WTC11 (cell line): ENCODE measurements at regions of chr7 and their contacts with region 1.

Region 1: DNA sequence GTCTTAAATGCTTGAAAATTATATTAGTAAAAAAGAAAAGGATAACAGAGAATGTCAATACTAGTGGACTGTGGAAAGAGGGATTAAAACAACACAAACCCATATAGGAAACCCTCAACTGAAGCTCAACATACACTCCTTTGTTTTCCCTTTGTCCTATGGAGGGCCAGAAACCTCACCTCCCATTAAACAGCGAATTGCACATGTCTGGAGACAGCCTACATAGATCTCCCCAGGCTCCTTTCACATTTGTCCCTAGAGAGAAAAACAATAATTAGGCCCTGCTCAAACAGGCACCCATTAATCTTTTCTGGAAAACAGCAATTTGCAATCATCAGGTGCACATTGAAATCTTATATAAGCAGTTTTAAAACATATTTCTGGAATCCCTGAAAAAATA is 87.6 kb upstream of the SEMA3D start:
- DNase-seq: no peak
- ATAC-seq: peak; percentile 57
- H3K4me3 Mint-ChIP-seq: no peak overlapping the region; the same call in 1 of the 2 replicates
- H3K27ac Mint-ChIP-seq: peak overlapping the region; percentile 71
- H3K4me1 Mint-ChIP-seq: peaks cover 57% of the 10 kb centered on the region
- H3K27me3 Mint-ChIP-seq: no peaks in the 10 kb centered on the region
- CTCF ChIP-seq: no peak

Region 2: GRCh38 chr7:85261336-85261735 is 13.1 kb before region 1 on chr7:
- CTCF ChIA-PET with region 1: no interaction called
- POLR2A ChIA-PET with region 1: interaction called, 12 read pairs
- DNase-seq: no peak
- ATAC-seq: no peak
- H3K4me3 Mint-ChIP-seq: no peak overlapping the region
- H3K27ac Mint-ChIP-seq: no peak overlapping the region
- H3K4me1 Mint-ChIP-seq: peaks cover 14% of the 10 kb centered on the region
- H3K27me3 Mint-ChIP-seq: no peaks in the 10 kb centered on the region
- CTCF ChIP-seq: no peak

Region 3: DNA sequence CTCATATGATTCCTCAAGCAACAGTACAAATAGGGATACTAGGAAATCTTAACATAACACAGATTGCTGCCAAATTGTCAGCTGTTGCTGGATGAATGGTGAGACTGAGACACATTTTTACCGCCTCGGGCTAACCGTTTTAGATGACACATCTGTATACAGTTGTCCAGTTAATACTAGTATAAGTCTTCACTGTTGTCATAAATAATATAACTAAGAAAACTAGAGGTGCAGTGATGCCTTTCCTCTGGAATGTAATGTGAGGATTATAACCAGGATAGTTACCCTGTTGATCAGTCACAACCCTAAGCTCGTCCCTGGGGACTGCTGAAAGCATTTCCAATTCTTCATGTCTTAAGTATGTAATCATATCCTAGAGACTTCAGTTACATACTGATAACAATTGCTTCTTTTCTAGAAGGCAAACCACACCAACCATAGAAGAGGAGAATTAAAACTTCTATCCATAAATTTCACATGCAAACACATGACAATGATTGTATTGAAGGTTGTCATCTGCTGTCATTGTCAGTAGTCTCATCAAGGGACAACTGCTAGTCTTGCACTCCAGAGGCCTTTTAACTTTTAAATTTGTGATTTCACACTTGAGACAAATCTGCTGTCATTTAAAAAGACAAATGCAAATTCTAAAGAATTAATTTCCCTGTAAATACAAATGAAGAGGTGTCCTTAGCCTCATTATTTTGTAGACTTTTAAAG is 12.8 kb after region 1 on chr7:
- CTCF ChIA-PET with region 1: no interaction called
- POLR2A ChIA-PET with region 1: no interaction called
- DNase-seq: no peak
- ATAC-seq: no peak
- H3K4me3 Mint-ChIP-seq: no peak overlapping the region
- H3K27ac Mint-ChIP-seq: no peak overlapping the region
- H3K4me1 Mint-ChIP-seq: peaks cover 42% of the 10 kb centered on the region
- H3K27me3 Mint-ChIP-seq: no peaks in the 10 kb centered on the region
- CTCF ChIP-seq: no peak

Region 4: DNA sequence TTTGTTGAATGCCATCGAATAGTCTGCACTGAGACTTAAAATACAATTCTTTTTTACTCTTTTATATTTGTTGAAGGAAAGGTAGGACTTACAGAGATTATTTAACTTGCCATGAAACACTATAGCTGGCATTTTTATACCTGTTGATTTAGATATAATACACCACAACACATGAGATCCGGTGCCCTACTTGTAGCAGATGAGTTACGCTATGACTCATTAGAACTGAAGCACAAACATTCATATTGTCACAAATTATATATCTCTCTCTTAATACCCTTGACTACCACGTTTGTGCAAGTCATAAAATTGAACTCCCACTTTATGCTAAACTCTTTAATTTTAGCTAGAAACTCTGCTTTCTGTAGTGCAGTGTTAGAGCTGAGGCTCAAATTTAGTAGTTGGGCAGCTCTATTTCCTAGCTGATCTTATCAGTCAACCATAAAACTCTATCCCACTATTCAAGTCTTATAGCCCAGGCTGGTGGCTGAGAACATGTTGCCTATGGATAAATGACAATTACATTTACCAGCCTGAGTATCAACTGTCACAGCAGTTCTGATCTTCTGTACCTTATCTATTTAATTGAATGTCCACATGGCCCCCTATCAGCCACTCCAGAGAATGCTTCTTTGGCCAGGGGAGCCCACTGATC is 49.8 kb after region 1 on chr7:
- CTCF ChIA-PET with region 1: no interaction called
- POLR2A ChIA-PET with region 1: no interaction called
- DNase-seq: no peak
- ATAC-seq: peak; percentile 48; the same call in 1 of the 2 replicates
- H3K4me3 Mint-ChIP-seq: no peak overlapping the region
- H3K27ac Mint-ChIP-seq: no peak overlapping the region
- H3K4me1 Mint-ChIP-seq: no peaks in the 10 kb centered on the region
- H3K27me3 Mint-ChIP-seq: no peaks in the 10 kb centered on the region
- CTCF ChIP-seq: no peak